Vagina (tissue), 2 donors: ENCODE measurements at regions of chr17 and their contacts with region 1.

Region 1: GRCh38 chr17:44636562-44636961 is 19.7 kb upstream of the MEIOC start:
- DNase-seq: no peak
- H3K4me3 ChIP-seq: no peak overlapping the region
- H3K27ac ChIP-seq: no peak overlapping the region
- H3K4me1 ChIP-seq: no peaks in the 10 kb centered on the region
- H3K27me3 ChIP-seq: no peaks in the 10 kb centered on the region
- CTCF ChIP-seq: peak in 2 of 3 experiments; percentile 50 to 59
- POLR2A ChIP-seq: no peak

Region 2: GRCh38 chr17:44533533-44534246 is 102.9 kb before region 1 on chr17:
- intact Hi-C with region 1: loop called (anchors 5 kb)
- DNase-seq: no peak
- H3K4me3 ChIP-seq: peak overlapping the region; percentile 15 to 36
- H3K27ac ChIP-seq: peak overlapping the region; percentile 74
- H3K4me1 ChIP-seq: peaks cover 10% of the 10 kb centered on the region
- H3K27me3 ChIP-seq: no peaks in the 10 kb centered on the region
- CTCF ChIP-seq: peak; percentile 91 to 99 (median 98)
- POLR2A ChIP-seq: no peak

Region 3: DNA sequence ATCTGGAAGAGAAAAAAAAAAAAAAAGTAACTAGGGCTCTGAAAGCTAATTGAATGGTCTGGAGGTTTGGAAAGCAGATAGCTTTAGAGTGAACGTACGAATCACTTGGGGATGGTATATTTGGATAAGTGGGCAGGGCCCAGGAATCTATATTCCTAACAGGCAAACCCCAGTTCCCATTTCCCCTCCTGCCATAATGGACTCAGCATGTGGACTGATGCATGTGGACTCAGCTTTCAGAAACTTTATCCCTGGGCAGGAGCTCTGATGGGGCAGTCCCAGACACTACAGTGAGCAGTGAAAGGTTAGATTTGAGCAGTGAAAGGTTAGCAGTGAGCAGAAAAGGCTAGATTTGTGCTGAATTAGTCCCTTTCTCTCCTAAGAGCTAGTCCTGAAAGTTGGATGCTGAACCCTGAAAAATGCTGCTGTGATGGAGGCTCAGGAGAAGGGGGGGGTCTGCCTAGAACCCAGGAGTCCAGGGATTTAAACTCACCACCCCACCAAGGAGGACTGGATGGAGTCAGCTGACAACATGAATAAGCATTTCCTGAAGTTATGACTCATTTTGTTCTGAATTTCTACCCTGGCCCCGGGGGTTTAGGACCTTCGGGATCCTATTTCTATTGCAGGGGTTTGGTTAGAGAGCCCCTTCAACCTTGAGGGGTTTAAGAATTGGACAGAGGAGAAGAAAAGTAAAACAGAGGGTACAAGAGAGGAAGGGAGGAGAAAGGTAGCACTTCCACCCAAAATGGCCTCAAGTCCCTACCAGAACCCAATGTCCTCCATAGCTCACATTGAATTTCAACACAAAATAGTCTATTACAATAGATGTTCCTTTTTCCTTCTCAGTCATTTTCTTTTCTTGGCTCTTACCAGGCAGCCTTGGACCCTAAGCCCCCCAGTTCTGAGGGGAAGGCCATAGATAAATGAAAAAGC is 89.6 kb before region 1 on chr17:
- intact Hi-C with region 1: loop called (anchors 5 kb)
- DNase-seq: no peak
- H3K4me3 ChIP-seq: no peak overlapping the region
- H3K27ac ChIP-seq: no peak overlapping the region
- H3K4me1 ChIP-seq: no peaks in the 10 kb centered on the region
- H3K27me3 ChIP-seq: no peaks in the 10 kb centered on the region
- CTCF ChIP-seq: no peak
- POLR2A ChIP-seq: no peak

Region 4: GRCh38 chr17:44661835-44662234 is 25.3 kb after region 1 on chr17:
- intact Hi-C with region 1: loop called (anchors 2 kb)
- DNase-seq: no peak
- H3K4me3 ChIP-seq: no peak overlapping the region
- H3K27ac ChIP-seq: no peak overlapping the region
- H3K4me1 ChIP-seq: no peaks in the 10 kb centered on the region
- H3K27me3 ChIP-seq: peaks cover 5% of the 10 kb centered on the region
- CTCF ChIP-seq: no peak
- POLR2A ChIP-seq: no peak